ENCODE measurements at regions of chr14 and their contacts with region 1.

Region 1: DNA sequence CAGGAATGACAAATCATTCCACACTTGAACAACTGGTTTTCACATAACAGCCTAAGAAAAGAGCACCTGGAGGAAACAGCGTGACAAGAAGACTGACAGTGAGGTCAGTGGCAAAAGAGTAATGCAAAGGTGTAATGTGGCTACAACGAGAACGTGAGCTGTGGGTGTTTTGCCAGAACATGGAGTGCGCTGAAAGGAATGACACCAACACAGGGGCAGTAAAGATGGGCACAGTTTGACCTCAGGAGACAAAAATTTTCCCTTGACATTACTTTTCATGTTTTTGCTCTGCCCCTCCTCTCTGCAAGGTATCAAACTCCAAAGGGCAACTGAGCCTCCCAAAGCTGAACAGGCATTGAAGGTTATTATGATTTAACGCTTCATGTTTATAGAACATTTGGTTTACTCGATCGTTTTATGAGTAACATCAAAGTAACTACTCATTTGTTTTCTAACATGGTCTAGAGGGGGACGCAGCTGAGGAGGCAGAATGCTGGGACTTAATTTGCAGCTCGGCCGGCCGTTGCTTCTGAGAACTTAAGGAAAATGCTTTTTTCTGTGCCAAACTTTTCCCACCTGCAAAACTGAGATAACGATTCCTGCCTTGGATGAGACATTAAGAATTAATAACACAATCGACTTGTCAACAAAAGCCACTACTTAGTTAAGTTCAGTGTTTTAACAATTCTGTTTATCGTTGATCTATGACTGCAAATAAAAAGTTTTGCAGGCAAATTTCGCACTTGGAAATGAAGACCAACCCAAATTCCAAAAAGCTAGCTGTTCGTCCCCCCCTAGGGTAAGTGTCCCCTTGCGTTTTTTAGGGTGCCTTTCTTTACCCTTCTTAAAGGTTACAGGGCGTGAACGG is 954 bp downstream of the HAUS4 start:
- DNase-seq: no peak
- H3K4me3 ChIP-seq: peak overlapping the region; percentile 71 to 88 (median 84)
- H3K27ac ChIP-seq: 0 out of 2 replicates have a peak overlapping the region, but pooled peaks have one; percentile 89
- H3K4me1 ChIP-seq: peaks cover 2 to 4% (median 2%) of the 10 kb centered on the region in 4 experiments; a peak in 5 of 7 replicates
- H3K27me3 ChIP-seq: no peaks in the 10 kb centered on the region
- CTCF ChIP-seq: no peak
- EP300 ChIP-seq: no peak
- POLR2A ChIP-seq: no peak
- RAD21 ChIP-seq: no peak

Region 2: DNA sequence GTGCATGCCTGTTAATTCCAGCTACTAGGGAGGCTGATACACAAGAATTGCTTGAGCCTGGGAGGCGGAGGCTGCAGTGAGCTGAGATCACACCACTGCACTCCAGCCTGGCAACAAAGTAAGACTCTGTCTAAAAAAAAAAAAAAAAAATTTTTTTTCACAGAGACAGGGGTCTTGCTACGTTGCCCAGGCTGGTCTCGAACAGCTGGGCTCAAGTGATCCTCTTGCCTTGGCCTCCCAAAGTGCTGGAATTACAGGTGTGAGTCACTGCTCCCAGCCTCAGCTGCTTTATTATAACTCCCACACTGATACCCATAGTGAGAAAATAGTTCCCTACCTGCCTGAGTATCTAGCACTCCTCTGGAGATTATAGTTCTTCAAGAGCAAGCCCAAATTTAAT is 10.3 kb before region 1 on chr14:
- CTCF ChIA-PET with region 1: interaction called, 43 read pairs
- POLR2A ChIA-PET with region 1: interaction called, 26 read pairs
- DNase-seq: no peak
- H3K4me3 ChIP-seq: no peak overlapping the region
- H3K27ac ChIP-seq: no peak overlapping the region
- H3K4me1 ChIP-seq: no peaks in the 10 kb centered on the region
- H3K27me3 ChIP-seq: no peaks in the 10 kb centered on the region
- CTCF ChIP-seq: no peak
- EP300 ChIP-seq: no peak
- POLR2A ChIP-seq: no peak
- RAD21 ChIP-seq: no peak

Region 3: DNA sequence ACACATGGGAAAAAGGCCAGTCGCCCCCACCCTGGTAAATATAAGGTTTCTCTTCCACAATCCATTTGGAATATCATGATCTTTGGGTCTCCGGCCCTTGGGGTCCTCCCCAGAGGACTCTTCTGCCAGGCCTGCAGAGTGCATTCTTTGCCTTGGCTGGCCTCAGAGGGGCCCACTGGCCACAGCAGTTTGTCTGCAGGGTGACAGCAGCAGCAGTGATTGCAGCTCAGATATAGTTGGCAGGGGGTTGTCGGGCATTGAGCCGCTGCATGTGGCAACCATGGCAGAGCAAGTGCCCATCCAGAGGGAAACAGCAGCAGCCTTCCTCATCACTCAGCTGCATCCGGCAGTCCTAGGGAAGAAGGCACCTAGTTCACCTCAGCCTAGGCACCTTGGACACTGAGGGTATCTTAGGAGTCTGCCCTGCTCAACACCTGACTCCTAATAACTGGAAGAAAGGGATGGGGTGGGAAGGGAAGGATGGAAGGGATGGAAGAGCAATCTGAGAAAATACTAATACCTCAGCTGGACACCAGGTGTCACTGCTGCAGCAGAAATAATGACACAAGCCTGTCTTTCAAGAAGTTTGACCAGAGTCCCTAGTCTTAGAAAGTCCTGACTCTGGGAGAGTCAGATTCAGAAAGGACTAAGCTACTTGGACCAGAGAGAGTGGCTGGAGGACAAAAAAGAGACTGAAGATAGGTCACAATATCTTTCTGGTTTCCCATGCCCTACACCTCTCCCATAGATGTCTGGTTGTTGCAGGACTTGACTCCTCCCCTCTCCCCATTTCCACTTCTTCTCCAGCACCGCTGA is 17.5 kb after region 1 on chr14:
- CTCF ChIA-PET with region 1: interaction called, 19 read pairs
- POLR2A ChIA-PET with region 1: interaction called, 115 read pairs
- DNase-seq: peak in 1 of 2 experiments; percentile 66
- H3K4me3 ChIP-seq: no peak overlapping the region
- H3K27ac ChIP-seq: no peak overlapping the region
- H3K4me1 ChIP-seq: peaks cover 13 to 20% (median 18%) of the 10 kb centered on the region in 4 experiments
- H3K27me3 ChIP-seq: no peaks in the 10 kb centered on the region
- CTCF ChIP-seq: peak in 2 of 3 experiments; percentile 75 to 76; a peak in 3 of 4 replicates
- EP300 ChIP-seq: no peak
- POLR2A ChIP-seq: no peak; a peak in 1 of 3 replicates
- RAD21 ChIP-seq: peak; percentile 84 to 88

Measured in H1 (cell line).